ENCODE measurements at regions of chr5 and their contacts with region 1.

Region 1: DNA sequence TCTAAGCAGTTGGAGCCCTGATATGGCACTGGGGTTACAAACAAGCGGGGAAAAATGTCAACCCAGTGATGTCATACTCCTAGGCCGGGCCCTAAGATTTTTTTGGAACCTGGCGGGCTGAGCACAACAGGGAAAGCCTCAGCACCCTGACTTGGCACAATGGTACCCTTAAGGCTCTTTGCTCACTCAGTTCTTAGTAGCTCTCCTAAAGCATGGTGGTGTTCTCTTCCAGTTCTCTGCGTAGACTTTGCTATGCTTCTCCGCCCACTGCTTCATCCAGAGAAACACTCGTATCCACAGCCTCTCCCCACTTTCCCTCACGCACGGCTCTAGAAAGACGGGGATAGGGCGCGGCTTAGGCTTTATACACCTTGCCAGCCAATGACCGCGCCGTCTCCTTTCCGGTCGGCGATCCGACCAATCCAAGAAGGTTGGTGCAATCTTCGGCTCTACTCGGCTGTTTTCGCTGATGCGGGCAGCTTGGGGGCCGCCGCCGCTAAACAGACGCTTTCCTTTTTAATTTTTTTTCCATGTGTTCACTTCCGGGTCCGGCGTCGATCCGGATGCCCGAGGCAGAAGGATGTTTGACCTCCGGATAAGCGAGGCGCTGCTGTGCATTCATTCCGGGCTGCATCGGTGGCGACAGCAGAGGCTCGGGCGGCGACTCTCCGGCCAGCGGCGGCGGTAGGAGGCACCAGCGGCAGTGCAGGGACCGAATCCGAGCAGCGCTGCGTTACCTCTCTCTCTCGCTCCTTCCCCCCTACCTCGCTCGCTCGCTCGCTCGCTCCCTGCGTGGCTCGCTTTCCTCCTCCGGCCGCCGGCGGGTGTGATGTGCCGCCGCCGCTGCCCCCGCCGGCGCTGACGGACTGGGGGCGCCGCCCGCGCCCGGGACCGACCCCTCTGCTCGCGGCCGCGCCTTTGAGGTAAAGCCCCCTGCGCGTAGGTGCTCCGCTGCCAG is at the start of gene CSNK1G3:
- DNase-seq: peak; percentile 96
- H3K4me3 ChIP-seq: peak within 1 kb of the TSS; percentile 39 to 87 (median 72)
- H3K27ac ChIP-seq: peak within 1 kb of the TSS; percentile 90 to 98 (median 96)
- H3K4me1 ChIP-seq: peaks cover 26 to 51% (median 35%) of the 10 kb centered on the region in 6 donors
- H3K27me3 ChIP-seq: no peaks in the 10 kb centered on the region
- CTCF ChIP-seq: peak in 4 of 11 experiments; percentile 17 to 24 (median 20)
- POLR2A ChIP-seq: peak in 2 of 3 donors; percentile 60 to 78
- total RNA-seq, gene CSNK1G3: 50.2 to 81.9 (median 53.5) TPM

Region 2: GRCh38 chr5:123423278-123424149 is 88.4 kb before region 1 on chr5 and contains the start of gene CEP120:
- intact Hi-C with region 1: loop called (anchors 5 kb)
- DNase-seq: peak; percentile 100
- H3K4me3 ChIP-seq: peak within 1 kb of the TSS; percentile 71 to 79 (median 76)
- H3K27ac ChIP-seq: peak within 1 kb of the TSS; percentile 84 to 96 (median 94)
- H3K4me1 ChIP-seq: peaks cover 10 to 64% (median 36%) of the 10 kb centered on the region in 6 donors
- H3K27me3 ChIP-seq: no peaks in the 10 kb centered on the region
- CTCF ChIP-seq: peak; percentile 75 to 95 (median 90)
- POLR2A ChIP-seq: peak in 2 of 3 donors; percentile 70 to 93
- total RNA-seq, gene CEP120: 27.7 to 43.3 (median 33.5) TPM

Measured in spleen (tissue), 13 donors.